HepG2 (cell line): ENCODE measurements at regions of chr4 and their contacts with region 1.

Region 1: DNA sequence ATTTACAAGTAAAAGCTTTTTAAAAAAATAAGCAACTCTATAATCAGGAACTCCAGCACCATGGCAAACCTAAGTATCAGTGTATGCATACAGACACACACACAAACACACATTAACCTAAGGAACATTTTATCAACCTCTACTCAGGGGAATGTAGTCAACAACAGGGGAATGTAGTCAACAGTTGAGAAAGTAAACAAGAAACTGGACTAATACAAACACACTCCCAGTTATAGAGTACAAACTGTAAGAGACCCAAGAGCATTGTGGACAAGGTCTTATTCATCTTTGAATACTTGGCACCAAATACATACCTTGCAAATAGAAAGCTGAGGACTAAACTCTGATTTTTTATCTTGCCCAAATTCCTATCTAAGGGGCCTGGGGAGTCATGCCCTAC is 36.2 kb downstream of the PAPSS1 start:
- DNase-seq: peak; percentile 77
- ATAC-seq: peak; percentile 98
- H3K4me3 ChIP-seq: no peak overlapping the region
- H3K27ac ChIP-seq: peak overlapping the region; percentile 12
- H3K4me1 ChIP-seq: peaks cover 29% of the 10 kb centered on the region
- H3K27me3 ChIP-seq: no peaks in the 10 kb centered on the region
- CTCF ChIP-seq: no peak
- EP300 ChIP-seq: peak in 1 of 2 experiments; percentile 72; a peak in 2 of 4 replicates
- POLR2A ChIP-seq: no peak
- RAD21 ChIP-seq: no peak

Region 2: DNA sequence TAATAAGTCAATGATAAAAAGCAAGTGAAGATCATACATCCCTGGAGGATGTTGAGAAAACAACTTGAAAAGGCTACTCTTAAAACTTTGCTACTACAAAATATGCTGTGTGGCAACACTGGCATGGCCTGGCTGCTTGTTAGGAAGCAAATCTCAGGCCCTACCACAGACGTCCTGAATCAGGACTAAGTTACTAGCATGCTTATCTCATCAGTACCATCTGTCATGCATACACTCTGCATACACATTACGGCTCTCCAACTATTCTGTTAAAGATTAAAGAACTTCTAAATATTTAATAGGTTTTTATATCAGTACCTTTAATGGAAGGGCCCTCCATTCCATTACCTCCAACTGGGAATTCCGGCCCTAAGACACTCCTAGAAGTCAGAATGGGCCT is 28.0 kb after region 1 on chr4:
- CTCF ChIA-PET with region 1: no interaction called
- POLR2A ChIA-PET with region 1: no interaction called
- in situ Hi-C with region 1: no loop called
- intact Hi-C with region 1: loop called (anchors 2 kb)
- DNase-seq: no peak
- ATAC-seq: no peak
- H3K4me3 ChIP-seq: no peak overlapping the region
- H3K27ac ChIP-seq: no peak overlapping the region
- H3K4me1 ChIP-seq: peaks cover 64% of the 10 kb centered on the region
- H3K27me3 ChIP-seq: no peaks in the 10 kb centered on the region
- CTCF ChIP-seq: no peak
- EP300 ChIP-seq: no peak
- POLR2A ChIP-seq: no peak
- RAD21 ChIP-seq: no peak